ENCODE measurements at regions of chr13 and their contacts with region 1.

Region 1: GRCh38 chr13:90984756-90985155 is 362.7 kb upstream of the MIR17HG start:
- DNase-seq: no peak
- H3K4me3 ChIP-seq: no peak overlapping the region
- H3K27ac ChIP-seq: no peak overlapping the region
- H3K4me1 ChIP-seq: no peaks in the 10 kb centered on the region
- H3K27me3 ChIP-seq: no peaks in the 10 kb centered on the region
- CTCF ChIP-seq: no peak
- POLR2A ChIP-seq: no peak

Region 2: DNA sequence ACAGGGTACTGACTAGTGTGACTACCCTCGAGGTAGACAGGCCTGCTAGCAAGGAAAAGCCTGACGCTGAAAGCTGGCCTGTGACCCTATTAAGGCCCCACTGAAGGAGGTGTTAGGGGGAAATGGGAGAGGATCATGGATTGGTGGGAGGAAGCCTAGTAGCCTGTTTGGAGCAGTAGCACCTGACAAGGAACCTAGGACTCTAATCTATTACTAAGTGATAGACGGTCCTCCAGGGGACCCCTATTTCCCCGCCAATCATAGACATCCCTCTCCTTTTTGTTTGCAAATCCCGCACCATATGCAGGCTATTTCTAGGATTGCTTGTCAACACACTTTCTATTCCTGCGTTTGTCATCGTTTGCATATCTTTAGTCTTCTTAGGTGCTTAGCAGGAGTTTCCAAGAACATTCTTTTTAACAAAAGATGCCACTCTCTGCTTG is 976.0 kb before region 1 on chr13:
- intact Hi-C with region 1: loop called (anchors 10 kb)
- DNase-seq: no peak
- H3K4me3 ChIP-seq: no peak overlapping the region
- H3K27ac ChIP-seq: no peak overlapping the region
- H3K4me1 ChIP-seq: no peaks in the 10 kb centered on the region
- H3K27me3 ChIP-seq: no peaks in the 10 kb centered on the region
- CTCF ChIP-seq: no peak
- POLR2A ChIP-seq: no peak

Measured in breast epithelium (tissue), 4 donors.